ENCODE measurements at regions of chr15 and their contacts with region 1.

Region 1: GRCh38 chr15:75842722-75843551 is at the start of gene UBE2Q2:
- DNase-seq: peak; percentile 85
- ATAC-seq: peak; percentile 63
- H3K4me3 Mint-ChIP-seq: peak within 1 kb of the TSS; percentile 90
- H3K27ac Mint-ChIP-seq: peak within 1 kb of the TSS; percentile 83
- H3K4me1 Mint-ChIP-seq: peaks cover 34% of the 10 kb centered on the region
- H3K27me3 Mint-ChIP-seq: peaks cover 9% of the 10 kb centered on the region
- total RNA-seq, gene UBE2Q2: 14.9 to 15.1 TPM

Region 2: DNA sequence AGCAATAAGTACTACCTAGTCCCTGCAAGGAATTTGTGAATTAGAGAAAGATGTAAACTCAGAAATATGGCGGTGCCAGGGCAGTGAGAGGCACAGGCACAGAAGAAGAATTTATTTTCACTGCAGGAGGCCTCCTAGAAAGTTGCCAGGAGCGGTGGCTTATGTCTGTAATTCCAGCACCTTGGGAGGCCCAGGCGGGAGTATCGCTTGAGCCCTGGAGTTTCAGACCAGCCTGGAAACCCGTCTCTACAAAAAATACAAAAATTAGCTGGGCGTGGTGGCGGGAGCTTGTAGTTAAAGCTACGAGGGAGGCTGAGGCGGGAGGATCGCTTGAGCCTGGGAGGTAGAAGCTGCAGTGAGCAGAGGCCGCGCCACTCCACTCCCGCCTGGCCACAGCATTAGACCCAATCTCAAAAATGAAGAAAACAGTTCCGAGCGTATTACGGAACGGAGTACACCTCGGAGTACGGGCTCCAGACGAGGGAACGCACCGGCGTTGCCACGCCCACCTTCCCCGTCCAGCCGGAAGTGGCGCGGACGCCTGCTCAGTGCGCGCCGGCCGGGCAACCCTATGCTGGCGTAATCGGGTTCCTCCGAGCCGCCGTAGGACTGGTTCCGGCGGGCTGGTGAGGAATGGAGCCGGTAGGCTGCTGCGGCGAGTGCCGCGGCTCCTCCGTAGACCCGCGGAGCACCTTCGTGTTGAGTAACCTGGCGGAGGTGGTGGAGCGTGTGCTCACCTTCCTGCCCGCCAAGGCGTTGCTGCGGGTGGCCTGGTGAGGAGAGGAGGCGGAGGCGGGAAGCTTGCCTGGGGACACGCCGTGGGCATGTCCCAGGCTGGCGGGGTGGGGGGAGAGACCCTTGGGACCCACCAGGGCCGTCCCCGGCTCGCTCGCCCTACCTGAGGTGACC is 60.6 kb after region 1 on chr15 and contains the start of gene FBXO22:
- CTCF ChIA-PET with region 1: no interaction called
- POLR2A ChIA-PET with region 1: no interaction called
- intact Hi-C with region 1: loop called (anchors 1 to 2 kb)
- DNase-seq: peak; percentile 97
- ATAC-seq: peak; percentile 97
- H3K4me3 Mint-ChIP-seq: peak within 1 kb of the TSS; percentile 97
- H3K27ac Mint-ChIP-seq: peak within 1 kb of the TSS; percentile 98
- H3K4me1 Mint-ChIP-seq: peaks cover 40% of the 10 kb centered on the region
- H3K27me3 Mint-ChIP-seq: no peaks in the 10 kb centered on the region
- total RNA-seq, gene FBXO22: 51.4 to 59.2 TPM

Region 3: DNA sequence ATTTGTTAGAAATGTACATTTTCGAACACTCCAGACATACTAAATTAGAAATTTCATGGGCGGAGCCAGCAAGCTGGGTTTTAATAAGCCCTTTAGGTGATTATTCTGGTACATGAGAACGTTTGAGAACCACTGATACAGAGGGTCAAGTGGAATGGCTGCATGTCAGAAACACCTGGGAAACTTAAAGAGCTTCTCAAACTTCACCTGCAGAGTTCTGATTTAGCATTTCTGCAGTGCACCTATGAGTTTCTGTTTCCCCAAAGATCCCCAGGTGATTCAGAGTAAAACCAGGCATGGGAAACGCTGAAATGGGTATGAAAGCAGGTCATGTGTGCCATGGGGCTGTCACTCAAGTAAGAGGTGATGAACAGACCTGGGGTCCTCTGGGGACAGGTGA is 284.9 kb after region 1 on chr15:
- CTCF ChIA-PET with region 1: no interaction called
- POLR2A ChIA-PET with region 1: interaction called, 10 read pairs
- intact Hi-C with region 1: no loop called
- DNase-seq: no peak
- ATAC-seq: no peak
- H3K4me3 Mint-ChIP-seq: no peak overlapping the region
- H3K27ac Mint-ChIP-seq: no peak overlapping the region
- H3K4me1 Mint-ChIP-seq: no peaks in the 10 kb centered on the region
- H3K27me3 Mint-ChIP-seq: peaks cover 11% of the 10 kb centered on the region

Region 4: GRCh38 chr15:76311100-76311953 is 468.4 kb after region 1 on chr15 and contains the start of gene ETFA:
- CTCF ChIA-PET with region 1: no interaction called
- POLR2A ChIA-PET with region 1: no interaction called
- intact Hi-C with region 1: loop called in 1 of 2 experiments (anchors 5 kb)
- DNase-seq: peak; percentile 95
- ATAC-seq: peak; percentile 98
- H3K4me3 Mint-ChIP-seq: peak within 1 kb of the TSS; percentile 87
- H3K27ac Mint-ChIP-seq: peak within 1 kb of the TSS; percentile 69
- H3K4me1 Mint-ChIP-seq: peaks cover 28% of the 10 kb centered on the region
- H3K27me3 Mint-ChIP-seq: no peaks in the 10 kb centered on the region
- total RNA-seq, gene ETFA: 100 to 136 TPM